ENCODE measurements at regions of chr4 and their contacts with region 1.

Region 1: DNA sequence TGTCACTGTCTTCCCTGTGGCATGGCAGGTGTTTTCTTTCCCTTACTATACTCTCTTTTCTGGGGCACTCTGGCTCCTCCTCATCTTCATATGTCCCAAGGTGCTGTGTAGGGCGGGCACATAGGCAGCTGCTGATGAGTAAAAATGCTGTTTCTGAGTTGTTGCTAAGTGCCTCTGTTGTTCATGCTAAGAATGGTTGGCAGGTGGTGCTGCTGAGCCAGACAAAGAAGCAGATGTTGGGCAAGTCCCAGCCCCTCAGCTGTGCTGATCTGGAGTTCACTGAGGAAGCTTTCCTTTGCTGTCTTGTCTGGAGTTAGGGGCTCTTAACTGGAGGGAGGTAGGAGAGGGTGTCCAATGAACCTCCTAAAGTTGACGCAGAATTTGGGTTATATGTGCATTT is 40.6 kb downstream of the HADH start:
- H3K4me3 ChIP-seq: no peak overlapping the region
- H3K27ac ChIP-seq: no peak overlapping the region
- H3K4me1 ChIP-seq: no peaks in the 10 kb centered on the region
- CTCF ChIP-seq: no peak

Region 2: DNA sequence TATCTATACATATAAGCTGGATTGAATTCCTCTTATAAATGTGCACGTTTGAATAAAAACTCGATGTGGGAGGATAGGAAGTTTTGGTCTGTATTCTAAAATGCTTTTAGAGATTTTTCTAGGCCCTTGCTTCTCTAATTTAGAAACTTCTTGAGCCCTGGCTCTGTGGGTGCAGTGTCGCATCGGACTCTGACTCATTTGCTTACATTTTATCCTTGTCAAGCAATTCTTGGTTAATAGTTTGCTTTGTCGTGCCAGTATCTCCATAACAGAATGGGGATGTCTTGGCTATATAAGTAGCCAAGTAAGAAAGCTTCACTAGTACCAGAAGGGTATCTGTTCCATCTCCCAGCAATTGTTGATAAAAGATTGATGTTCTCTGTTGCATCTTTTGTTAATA is 194.9 kb before region 1 on chr4:
- CTCF ChIA-PET with region 1: no interaction called
- POLR2A ChIA-PET with region 1: no interaction called
- H3K4me3 ChIP-seq: no peak overlapping the region
- H3K27ac ChIP-seq: no peak overlapping the region
- H3K4me1 ChIP-seq: no peaks in the 10 kb centered on the region
- CTCF ChIP-seq: no peak

Region 3: DNA sequence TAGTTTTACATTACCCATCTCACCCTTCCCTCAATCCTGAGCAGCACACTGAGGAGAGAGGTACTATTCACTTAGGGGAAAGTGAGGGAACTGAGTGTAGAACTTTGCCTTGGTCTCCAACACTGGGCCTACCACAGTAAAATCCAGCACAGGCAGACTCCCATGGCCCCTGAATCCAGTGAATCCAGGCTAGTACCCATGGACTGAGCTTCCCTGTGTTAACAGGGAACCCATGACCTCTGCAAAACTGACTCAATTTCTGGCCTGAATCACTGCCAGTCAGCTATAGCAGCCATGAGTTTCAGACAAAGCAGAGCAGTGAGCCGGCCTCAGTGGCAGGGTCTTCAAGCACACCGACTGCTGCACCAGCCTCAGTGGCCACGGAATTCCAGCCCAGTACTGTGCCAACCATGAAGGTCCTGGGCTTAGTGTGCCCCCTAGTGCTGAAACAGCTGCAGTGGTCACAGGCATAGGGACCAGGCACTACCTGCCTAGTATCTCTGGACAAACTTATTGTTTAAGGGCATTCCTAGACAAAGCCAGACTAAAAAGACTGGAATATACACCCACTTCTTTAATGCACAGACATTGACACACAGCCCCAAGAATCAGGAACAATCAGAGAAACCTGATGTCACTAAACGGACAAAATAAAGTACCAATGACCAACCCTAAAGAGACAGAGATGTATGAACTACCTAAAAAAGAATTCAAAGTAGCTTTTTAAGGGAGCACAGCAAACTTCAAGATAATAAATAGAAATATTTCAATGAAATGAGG is 462.7 kb after region 1 on chr4:
- CTCF ChIA-PET with region 1: interaction called, 12 read pairs
- POLR2A ChIA-PET with region 1: no interaction called
- H3K4me3 ChIP-seq: no peak overlapping the region
- H3K27ac ChIP-seq: no peak overlapping the region
- H3K4me1 ChIP-seq: no peaks in the 10 kb centered on the region
- CTCF ChIP-seq: no peak

Region 4: GRCh38 chr4:108662629-108663028 is 632.3 kb after region 1 on chr4:
- CTCF ChIA-PET with region 1: no interaction called
- POLR2A ChIA-PET with region 1: interaction called, 11 read pairs
- H3K4me3 ChIP-seq: no peak overlapping the region
- H3K27ac ChIP-seq: no peak overlapping the region
- H3K4me1 ChIP-seq: no peaks in the 10 kb centered on the region
- CTCF ChIP-seq: no peak

Measured in HEK293 (cell line).